Prostate gland (tissue), 2 donors: ENCODE measurements at regions of chr22 and their contacts with region 1.

Region 1: DNA sequence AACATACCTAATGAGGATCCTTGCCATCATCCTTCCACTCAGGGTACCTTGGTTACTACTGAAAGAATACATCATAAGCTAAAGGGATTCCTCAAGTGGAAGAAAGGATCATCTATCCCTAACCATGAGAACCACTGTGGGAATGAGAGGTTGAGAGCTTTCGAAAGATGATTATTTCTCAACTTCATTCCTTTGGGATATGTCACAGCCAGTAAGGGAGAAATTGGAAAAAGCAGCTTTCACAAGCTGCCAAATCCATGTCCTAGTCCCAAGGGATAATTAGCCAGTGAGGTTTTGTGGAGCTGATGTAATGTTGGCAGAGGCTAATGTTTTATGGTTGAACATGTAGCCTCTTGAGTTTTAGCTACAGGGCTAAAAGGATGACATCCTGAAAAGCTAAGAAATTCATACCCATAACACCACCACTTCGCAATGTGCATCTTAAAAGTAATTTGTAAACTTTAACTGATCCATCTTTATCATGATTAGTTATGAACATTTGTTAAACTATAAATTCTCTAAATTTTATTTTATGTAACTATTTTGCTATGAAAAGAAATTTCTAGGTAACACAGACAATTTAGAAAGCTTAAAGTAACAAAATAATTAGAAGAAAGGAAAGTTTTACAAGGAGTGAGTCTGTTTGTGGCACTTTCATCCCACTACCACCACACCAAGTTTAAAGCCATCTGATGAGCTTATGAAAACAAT is 123.9 kb downstream of the MRTFA start:
- DNase-seq: no peak
- H3K4me3 ChIP-seq: no peak overlapping the region
- H3K27ac ChIP-seq: peak overlapping the region; percentile 18 to 46
- H3K4me1 ChIP-seq: no peaks in the 10 kb centered on the region
- H3K27me3 ChIP-seq: no peaks in the 10 kb centered on the region
- CTCF ChIP-seq: no peak
- POLR2A ChIP-seq: no peak

Region 2: DNA sequence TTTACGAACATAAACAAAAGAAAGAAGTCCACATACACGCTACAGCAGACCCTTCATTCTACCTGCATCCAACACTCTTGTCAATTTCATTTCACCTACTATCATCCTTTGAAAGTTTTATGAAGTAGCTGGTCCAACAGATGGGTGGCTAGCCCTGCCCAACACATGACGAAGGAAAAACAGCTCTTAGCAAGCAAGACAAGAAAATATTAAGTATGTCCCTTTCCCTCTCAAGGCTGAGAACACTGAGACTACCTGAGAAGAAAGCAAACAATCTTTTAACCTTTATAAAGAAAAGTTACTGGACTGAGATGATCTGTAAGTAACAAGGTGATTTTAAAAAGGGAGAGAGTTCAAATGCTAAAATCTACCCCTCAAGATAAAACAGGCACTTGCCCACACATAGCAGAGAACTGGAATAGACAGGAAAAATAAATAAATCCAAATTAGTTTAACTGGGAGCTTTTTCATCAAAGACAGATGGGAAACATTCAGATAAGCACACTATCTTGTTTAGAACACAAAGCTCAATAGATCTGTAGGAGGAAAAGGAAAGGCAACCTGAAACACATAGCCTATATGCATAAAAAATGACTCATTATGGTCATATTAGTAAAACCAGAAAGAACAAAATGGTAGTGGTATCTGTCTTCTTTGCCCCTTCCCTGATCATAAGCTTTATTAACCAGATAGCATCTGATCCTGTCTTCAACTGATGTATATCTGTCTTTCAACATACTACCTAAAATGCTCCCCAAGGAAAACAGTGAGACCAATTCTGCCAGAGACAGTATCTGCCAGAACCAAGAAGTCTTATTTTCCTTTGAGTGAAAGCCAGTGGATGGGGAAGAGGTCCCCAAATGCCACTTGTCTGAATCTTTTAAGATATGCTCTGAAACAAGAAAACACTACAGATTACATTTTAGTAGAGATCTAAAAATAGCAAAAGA is 19.6 kb after region 1 on chr22:
- intact Hi-C with region 1: loop called (anchors 2 kb)
- DNase-seq: no peak
- H3K4me3 ChIP-seq: no peak overlapping the region
- H3K27ac ChIP-seq: no peak overlapping the region
- H3K4me1 ChIP-seq: peaks cover 4% of the 10 kb centered on the region
- H3K27me3 ChIP-seq: no peaks in the 10 kb centered on the region
- CTCF ChIP-seq: no peak
- POLR2A ChIP-seq: no peak

Region 3: GRCh38 chr22:40567106-40567505 is 54.5 kb after region 1 on chr22:
- intact Hi-C with region 1: no loop called
- DNase-seq: no peak
- H3K4me3 ChIP-seq: no peak overlapping the region
- H3K27ac ChIP-seq: no peak overlapping the region
- H3K4me1 ChIP-seq: no peaks in the 10 kb centered on the region
- H3K27me3 ChIP-seq: no peaks in the 10 kb centered on the region
- CTCF ChIP-seq: no peak
- POLR2A ChIP-seq: no peak